Activated naive CD4-positive, alpha-beta T cell treated with anti-CD3 and anti-CD28 coated beads for 36 hours (primary cell): ENCODE measurements at regions of chr14 and their contacts with region 1.

Region 1: GRCh38 chr14:94173885-94174603 is at the start of gene PPP4R4:
- DNase-seq: peak; percentile 95
- H3K4me3 Mint-ChIP-seq: peak within 1 kb of the TSS; percentile 76
- H3K27ac Mint-ChIP-seq: peak within 1 kb of the TSS; percentile 42
- H3K4me1 Mint-ChIP-seq: peaks cover 37% of the 10 kb centered on the region
- H3K27me3 Mint-ChIP-seq: no peaks in the 10 kb centered on the region
- total RNA-seq, gene PPP4R4: 13.2 to 13.9 TPM

Region 2: DNA sequence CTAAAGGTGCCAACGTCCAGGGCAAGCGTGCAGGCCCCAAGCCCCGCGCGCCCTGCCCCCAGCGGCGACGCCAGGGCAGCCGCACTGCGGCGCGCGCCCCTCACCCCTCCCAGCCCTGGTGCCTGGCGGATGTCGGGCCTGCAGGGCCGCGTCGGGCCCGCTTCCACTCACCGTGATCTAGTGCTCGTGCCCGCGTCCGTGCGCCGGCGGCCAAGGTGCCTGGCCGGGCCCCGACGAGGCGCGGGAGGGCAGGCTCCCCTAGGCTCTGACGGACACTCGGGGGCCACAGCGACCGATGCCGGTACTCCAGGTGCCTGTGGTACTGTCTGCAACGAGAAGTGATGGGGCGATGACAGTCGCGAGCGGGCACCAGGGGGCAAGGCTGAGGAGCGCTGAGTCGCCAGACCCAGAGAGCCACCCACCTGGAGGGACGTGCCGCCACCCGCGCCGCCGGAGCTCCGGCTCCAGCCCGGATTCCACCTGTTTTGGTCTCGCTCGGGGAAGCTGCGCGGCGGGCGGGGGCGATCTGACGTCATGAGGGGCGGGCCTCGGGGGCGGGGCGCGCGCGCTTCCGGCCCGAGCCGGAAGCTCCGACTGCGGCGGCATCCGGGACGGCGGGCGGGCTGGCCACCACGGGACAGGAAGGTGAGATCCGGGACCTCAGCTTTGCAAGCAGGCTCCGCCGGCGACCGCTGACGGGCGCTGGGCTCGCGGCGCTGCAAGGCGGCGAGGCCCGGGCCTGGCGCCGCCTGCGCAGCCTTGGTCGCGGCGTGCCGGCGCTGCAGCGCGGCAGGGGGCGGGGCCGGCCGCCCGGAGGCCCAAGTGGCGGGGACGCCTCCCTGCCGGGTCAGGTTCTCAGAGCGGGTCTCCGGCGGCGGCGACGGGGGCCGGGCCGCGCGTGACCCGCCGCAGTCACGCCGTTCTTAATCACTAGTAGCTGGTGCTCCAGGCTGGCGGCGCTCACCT is 989.4 kb before region 1 on chr14 and contains the starts of genes LYSET and MOAP1:
- CTCF ChIA-PET with region 1: no interaction called
- intact Hi-C with region 1: loop called (anchors 10 kb)
- DNase-seq: peak; percentile 91
- H3K4me3 Mint-ChIP-seq: peak within 1 kb of the TSS; percentile 88
- H3K27ac Mint-ChIP-seq: peak within 1 kb of the TSS; percentile 91
- H3K4me1 Mint-ChIP-seq: peaks cover 42% of the 10 kb centered on the region
- H3K27me3 Mint-ChIP-seq: no peaks in the 10 kb centered on the region
- total RNA-seq, gene LYSET: 11.4 to 11.6 TPM
- total RNA-seq, gene MOAP1: 11.9 to 13.1 TPM

Region 3: DNA sequence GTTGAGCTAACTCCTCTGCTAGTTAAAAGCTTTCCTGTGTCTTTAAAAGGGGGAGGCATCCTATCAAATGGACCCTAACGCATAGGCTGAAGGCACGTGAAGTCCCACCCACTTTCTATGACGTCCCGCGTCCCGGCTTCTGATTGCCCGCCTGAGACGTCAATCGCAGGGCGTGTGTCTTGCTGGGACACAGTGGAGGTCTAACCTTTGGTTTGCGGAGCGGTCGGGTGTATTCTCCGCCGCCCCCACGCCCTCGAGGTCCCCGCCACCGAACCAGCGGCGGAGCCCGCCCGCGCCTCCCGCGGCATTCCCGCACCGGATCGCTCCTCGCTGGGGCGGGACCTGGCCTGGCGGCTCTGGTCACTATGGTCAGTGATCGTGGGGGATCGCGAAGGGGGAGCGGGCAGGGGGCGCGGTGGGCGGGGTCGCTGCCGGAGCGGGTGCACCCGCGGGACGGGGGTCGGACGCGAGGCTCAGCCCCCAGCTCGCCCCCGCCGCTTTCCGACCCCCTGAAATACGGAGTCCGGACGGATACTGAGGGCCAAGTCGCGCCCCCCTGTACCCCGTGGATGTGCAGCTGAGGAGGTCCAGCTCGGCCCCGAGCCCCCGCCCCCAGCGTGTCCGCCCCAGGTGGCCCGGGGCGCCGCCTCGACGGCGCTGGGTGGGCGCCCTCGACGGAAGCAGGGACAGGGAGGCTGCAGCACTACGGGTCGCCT is 147.7 kb before region 1 on chr14 and contains the start of gene OTUB2:
- CTCF ChIA-PET with region 1: no interaction called
- intact Hi-C with region 1: loop called (anchors 1 kb)
- DNase-seq: peak; percentile 99
- H3K4me3 Mint-ChIP-seq: peak within 1 kb of the TSS; percentile 68
- H3K27ac Mint-ChIP-seq: no peak within 1 kb of the TSS
- H3K4me1 Mint-ChIP-seq: peaks cover 34% of the 10 kb centered on the region
- H3K27me3 Mint-ChIP-seq: no peaks in the 10 kb centered on the region
- total RNA-seq, gene OTUB2: 1.6 to 1.7 TPM

Region 4: GRCh38 chr14:94080471-94081289 is 93.4 kb before region 1 on chr14 and contains the start of gene DDX24:
- CTCF ChIA-PET with region 1: no interaction called
- intact Hi-C with region 1: loop called (anchors 1 kb)
- DNase-seq: peak; percentile 98
- H3K4me3 Mint-ChIP-seq: peak within 1 kb of the TSS; percentile 98
- H3K27ac Mint-ChIP-seq: peak within 1 kb of the TSS; percentile 98
- H3K4me1 Mint-ChIP-seq: peaks cover 44% of the 10 kb centered on the region
- H3K27me3 Mint-ChIP-seq: no peaks in the 10 kb centered on the region
- total RNA-seq, gene DDX24: 190 to 200 TPM

Region 5: GRCh38 chr14:94161981-94162380 is 12.1 kb before region 1 on chr14:
- CTCF ChIA-PET with region 1: interaction called, 4 read pairs
- intact Hi-C with region 1: loop called (anchors 1 kb)
- DNase-seq: peak; percentile 32
- H3K4me3 Mint-ChIP-seq: no peak overlapping the region
- H3K27ac Mint-ChIP-seq: peak overlapping the region; percentile 38
- H3K4me1 Mint-ChIP-seq: peaks cover 74% of the 10 kb centered on the region
- H3K27me3 Mint-ChIP-seq: peaks cover 2% of the 10 kb centered on the region

Region 6: GRCh38 chr14:94292872-94293577 is 119.0 kb after region 1 on chr14 and contains the start of gene SERPINA10:
- CTCF ChIA-PET with region 1: no interaction called
- intact Hi-C with region 1: no loop called
- DNase-seq: no peak
- H3K4me3 Mint-ChIP-seq: no peak within 1 kb of the TSS
- H3K27ac Mint-ChIP-seq: no peak within 1 kb of the TSS
- H3K4me1 Mint-ChIP-seq: peaks cover 6% of the 10 kb centered on the region
- H3K27me3 Mint-ChIP-seq: peaks cover 9% of the 10 kb centered on the region
- total RNA-seq, gene SERPINA10: not detected

Region 7: DNA sequence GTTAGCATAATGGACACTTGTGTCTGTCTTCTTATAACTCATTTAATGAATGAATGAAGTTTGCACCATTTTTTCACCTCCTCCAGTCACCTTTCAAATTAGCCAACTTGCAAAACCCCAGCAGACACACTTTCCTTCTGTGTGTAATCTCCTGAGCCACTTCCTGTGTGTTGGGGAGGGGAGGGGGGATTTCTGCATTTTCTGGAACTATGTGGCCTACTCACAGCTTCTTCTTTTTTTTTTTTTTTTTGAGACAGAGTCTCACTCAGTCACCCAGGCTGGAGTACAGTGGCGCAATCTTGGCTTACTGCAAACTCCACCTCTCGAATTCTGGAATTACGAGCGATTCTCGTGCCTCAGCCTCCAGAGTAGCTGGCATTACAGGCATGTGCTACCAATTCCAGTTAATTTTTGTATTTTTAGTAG is 218.5 kb after region 1 on chr14:
- CTCF ChIA-PET with region 1: no interaction called
- intact Hi-C with region 1: loop called (anchors 5 kb)
- DNase-seq: peak; percentile 85
- H3K4me3 Mint-ChIP-seq: no peak overlapping the region
- H3K27ac Mint-ChIP-seq: peak overlapping the region; percentile 82
- H3K4me1 Mint-ChIP-seq: peaks cover 48% of the 10 kb centered on the region
- H3K27me3 Mint-ChIP-seq: no peaks in the 10 kb centered on the region